ENCODE measurements at regions of chr19 and their contacts with region 1.

Region 1: DNA sequence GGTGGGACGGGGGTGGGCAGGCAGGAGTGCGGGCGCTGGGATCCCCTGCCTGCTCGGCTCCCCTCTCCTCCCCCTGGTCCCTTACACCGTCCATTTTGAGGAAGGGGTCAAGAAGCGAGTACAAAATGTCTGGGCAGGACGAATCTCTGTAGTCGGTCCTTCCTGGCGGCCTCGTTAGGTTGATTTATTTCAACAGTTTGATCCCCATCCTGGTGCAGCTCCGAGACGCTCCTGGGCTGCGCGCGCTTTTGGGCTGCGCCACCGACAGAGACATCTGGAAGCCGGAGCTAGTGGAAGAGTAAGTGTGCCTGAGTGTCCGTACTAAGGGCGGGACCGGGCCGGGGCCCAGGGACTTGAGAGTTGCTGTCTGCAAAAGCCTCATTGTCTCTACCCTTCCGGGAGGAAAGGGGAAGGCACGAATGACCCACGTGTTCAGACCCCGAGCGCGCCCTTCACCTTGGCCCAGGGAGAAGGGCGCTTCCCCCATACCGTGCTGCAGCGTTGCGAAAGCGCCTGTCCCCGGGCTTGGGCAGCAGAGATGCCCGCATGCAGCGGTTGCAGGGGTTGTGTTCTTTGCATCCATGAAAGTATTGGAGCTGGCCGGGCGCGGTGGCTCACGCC is 1.8 kb downstream of the ZNF114 start:
- DNase-seq: peak in 1 of 2 donors; percentile 29
- ATAC-seq: peak in 2 of 4 donors; percentile 40 to 56
- H3K4me3 ChIP-seq: peak overlapping the region; percentile 61
- H3K27ac ChIP-seq: no peak overlapping the region
- H3K4me1 ChIP-seq: peaks cover 9% of the 10 kb centered on the region
- H3K27me3 ChIP-seq: peaks cover 0 to 25% (median 5%) of the 10 kb centered on the region in 3 donors
- CTCF ChIP-seq: no peak

Region 2: DNA sequence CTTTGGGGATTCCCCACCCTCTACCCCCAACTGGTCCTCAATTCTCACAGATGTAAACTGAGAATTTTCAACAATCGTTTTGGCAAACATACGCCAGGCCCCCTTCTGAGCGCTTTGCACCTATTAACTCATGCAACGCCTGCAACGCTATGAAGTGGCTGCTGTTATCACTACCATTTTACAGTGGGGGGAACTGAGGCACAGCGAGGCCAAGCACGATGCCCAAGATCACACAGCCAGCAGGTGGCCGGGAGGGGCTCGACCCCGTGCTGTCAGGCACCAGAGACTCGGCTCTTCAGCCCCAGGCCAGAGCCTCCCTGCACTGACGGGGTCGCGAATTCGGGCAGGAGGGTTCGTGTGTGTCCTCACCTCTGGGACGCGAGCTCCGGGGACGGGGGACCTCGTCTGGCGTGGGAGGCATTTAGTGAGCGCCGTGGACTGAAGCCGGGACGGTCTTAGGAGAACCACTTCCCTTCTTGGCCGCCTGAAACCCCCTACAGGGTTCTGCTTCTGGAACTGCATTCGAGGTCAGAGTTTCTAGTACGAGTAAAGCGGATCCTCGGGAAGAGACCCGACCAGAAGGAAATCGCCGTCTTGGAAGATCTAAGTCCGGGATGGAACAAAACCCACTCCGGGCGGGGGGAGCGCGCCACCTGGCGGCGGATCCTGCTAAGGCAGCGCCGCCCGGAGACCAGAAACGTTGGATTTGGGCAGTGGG is 19.3 kb after region 1 on chr19:
- intact Hi-C with region 1: loop called (anchors 1 kb)
- DNase-seq: peak; percentile 87 to 91
- ATAC-seq: peak; percentile 74 to 98 (median 88)
- H3K4me3 ChIP-seq: peak overlapping the region; percentile 53
- H3K27ac ChIP-seq: no peak overlapping the region
- H3K4me1 ChIP-seq: peaks cover 3% of the 10 kb centered on the region
- H3K27me3 ChIP-seq: peaks cover 0 to 18% (median 2%) of the 10 kb centered on the region in 3 donors
- CTCF ChIP-seq: peak; percentile 98